CD8-positive, alpha-beta T cell (primary cell): ENCODE measurements at regions of chr6 and their contacts with region 1.

Region 1: DNA sequence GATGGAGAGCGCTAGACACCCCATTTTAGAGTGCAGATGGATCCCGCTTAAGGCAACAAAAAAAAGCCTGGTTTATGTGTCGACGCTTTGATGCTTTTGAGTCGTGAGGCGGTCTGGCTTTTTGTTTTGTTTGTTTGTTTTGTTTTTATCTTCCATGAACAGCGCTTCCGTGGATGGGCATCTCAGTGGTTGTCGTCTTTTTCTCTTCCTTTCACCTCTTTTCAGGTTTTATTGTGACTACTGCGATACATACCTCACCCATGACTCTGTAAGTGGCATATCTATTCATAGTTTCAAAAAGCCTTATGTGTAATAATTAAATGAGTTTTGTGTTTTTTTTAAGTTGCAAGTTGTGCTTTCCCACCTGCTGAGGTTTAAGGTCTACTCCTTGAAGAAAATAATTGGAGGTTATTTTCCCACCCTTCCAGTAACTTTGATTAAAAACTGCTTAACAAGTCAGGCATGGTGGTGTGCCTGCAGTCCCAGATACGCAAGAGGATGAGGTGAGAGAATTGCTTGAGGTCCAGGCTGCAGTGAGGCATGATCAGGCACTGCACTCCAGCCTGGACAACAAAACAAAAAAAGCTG is 476 bp downstream of the SNRPC start:
- DNase-seq: no peak
- ATAC-seq: no peak
- H3K4me3 ChIP-seq: peak overlapping the region; percentile 71 to 79
- H3K4me3 Mint-ChIP-seq: no peak overlapping the region
- H3K27ac ChIP-seq: peak overlapping the region; percentile 86 to 92
- H3K27ac Mint-ChIP-seq: no peak overlapping the region
- H3K4me1 ChIP-seq: peaks cover 18% of the 10 kb centered on the region
- H3K4me1 Mint-ChIP-seq: peaks cover 20% of the 10 kb centered on the region
- H3K27me3 ChIP-seq: no peaks in the 10 kb centered on the region
- H3K27me3 Mint-ChIP-seq: no peaks in the 10 kb centered on the region
- CTCF ChIP-seq: no peak

Region 2: GRCh38 chr6:34425498-34426410 is 332.0 kb before region 1 on chr6 and contains the start of gene RPS10:
- CTCF ChIA-PET with region 1: no interaction called
- POLR2A ChIA-PET with region 1: no interaction called
- intact Hi-C with region 1: loop called (anchors 1 to 2 kb)
- DNase-seq: peak; percentile 79 to 95 (median 89)
- ATAC-seq: peak; percentile 98
- H3K4me3 ChIP-seq: peak within 1 kb of the TSS; percentile 78 to 96
- H3K4me3 Mint-ChIP-seq: peak within 1 kb of the TSS; percentile 96
- H3K27ac ChIP-seq: peak within 1 kb of the TSS; percentile 90 to 95
- H3K27ac Mint-ChIP-seq: peak within 1 kb of the TSS; percentile 97
- H3K4me1 ChIP-seq: peaks cover 23% of the 10 kb centered on the region
- H3K4me1 Mint-ChIP-seq: peaks cover 36% of the 10 kb centered on the region
- H3K27me3 ChIP-seq: no peaks in the 10 kb centered on the region
- H3K27me3 Mint-ChIP-seq: no peaks in the 10 kb centered on the region
- CTCF ChIP-seq: no peak
- total RNA-seq, gene RPS10: 2,721 to 2,770 TPM

Region 3: DNA sequence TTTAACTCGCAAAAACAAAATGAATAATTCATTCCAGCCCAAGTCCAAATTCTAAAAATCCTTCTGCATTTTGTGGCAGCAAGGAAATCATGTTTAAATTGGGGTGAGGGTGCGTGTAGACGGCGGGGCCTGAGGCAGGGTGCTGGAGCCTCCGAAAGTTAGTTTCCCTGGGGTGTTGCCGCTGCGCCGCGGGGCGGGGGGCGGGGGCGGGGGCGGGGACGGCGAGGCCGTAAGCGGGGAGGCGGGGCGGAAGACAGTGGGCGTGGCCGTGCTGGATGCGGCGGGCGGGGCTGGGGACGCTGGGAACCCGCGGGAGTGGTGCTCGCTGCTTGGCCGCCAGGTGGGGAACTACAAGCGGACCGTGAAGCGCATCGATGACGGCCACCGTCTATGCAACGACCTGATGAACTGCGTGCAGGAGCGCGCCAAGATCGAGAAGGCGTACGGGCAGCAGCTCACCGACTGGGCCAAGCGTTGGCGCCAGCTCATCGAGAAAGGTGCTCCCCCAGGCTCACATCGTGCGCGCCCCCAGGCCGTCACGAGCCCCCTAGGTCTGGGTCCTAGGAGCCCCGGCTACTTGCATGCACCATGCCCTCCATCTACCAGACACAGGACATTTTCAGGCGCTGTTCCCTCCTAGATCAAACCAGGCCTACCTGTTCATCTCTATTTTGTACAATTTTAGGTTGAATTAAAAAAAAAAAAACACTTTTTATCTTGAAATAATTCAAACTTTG is 230.6 kb before region 1 on chr6:
- CTCF ChIA-PET with region 1: interaction called, 4 read pairs
- POLR2A ChIA-PET with region 1: interaction called, 3 read pairs
- intact Hi-C with region 1: loop called in 1 of 2 experiments (anchors 1 kb)
- DNase-seq: peak; percentile 91 to 99 (median 96)
- ATAC-seq: peak; percentile 98
- H3K4me3 ChIP-seq: peak overlapping the region; percentile 17 to 31
- H3K4me3 Mint-ChIP-seq: peak overlapping the region; percentile 58
- H3K27ac ChIP-seq: peak overlapping the region; percentile 31 to 58
- H3K27ac Mint-ChIP-seq: peak overlapping the region; percentile 80
- H3K4me1 ChIP-seq: peaks cover 7% of the 10 kb centered on the region
- H3K4me1 Mint-ChIP-seq: peaks cover 14% of the 10 kb centered on the region
- H3K27me3 ChIP-seq: no peaks in the 10 kb centered on the region
- H3K27me3 Mint-ChIP-seq: no peaks in the 10 kb centered on the region
- CTCF ChIP-seq: peak; percentile 51

Region 4: GRCh38 chr6:34671801-34672656 is 85.8 kb before region 1 on chr6:
- CTCF ChIA-PET with region 1: no interaction called
- POLR2A ChIA-PET with region 1: interaction called, 4 read pairs
- intact Hi-C with region 1: loop called in 1 of 2 experiments (anchors 1 kb)
- DNase-seq: peak; percentile 52 to 94 (median 75)
- ATAC-seq: peak; percentile 98
- H3K4me3 ChIP-seq: peak overlapping the region in 1 of 2 experiments; percentile 21
- H3K4me3 Mint-ChIP-seq: peak overlapping the region; percentile 72
- H3K27ac ChIP-seq: peak overlapping the region; percentile 25 to 82
- H3K27ac Mint-ChIP-seq: peak overlapping the region; percentile 95
- H3K4me1 ChIP-seq: peaks cover 50% of the 10 kb centered on the region
- H3K4me1 Mint-ChIP-seq: peaks cover 71% of the 10 kb centered on the region
- H3K27me3 ChIP-seq: no peaks in the 10 kb centered on the region
- H3K27me3 Mint-ChIP-seq: no peaks in the 10 kb centered on the region
- CTCF ChIP-seq: no peak

Region 5: DNA sequence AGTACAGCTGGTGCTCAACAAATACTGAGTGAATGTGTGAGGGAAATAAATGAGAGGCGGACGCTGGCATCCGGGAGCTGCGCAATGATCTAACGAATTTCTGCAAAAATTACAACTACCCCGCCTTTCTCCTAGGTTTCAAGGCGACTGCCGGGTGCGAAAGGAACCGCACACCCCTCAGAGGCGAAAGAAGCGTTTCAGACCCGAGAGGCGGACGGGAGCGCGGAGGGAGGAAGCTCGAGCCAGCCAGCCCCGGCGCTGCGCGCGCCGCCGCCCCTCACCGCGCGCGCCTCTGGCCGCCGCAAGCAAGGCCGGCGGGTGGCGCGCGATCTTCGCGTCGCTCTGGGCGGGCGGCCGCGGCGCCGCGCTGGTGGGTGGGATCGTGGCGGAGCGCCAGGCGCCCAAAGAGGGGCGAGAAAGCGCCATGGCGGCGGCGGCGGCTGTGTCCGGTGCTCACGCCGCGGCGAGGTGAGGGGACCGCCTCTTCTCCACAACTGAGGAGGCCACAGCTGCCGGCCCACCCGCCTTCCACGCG is 34.0 kb after region 1 on chr6 and contains the start of gene BLTP3A:
- CTCF ChIA-PET with region 1: interaction called, 6 read pairs
- POLR2A ChIA-PET with region 1: interaction called, 17 read pairs
- intact Hi-C with region 1: loop called (anchors 1 kb)
- DNase-seq: peak; percentile 48 to 91 (median 71)
- ATAC-seq: peak; percentile 90
- H3K4me3 ChIP-seq: peak within 1 kb of the TSS; percentile 75 to 95
- H3K4me3 Mint-ChIP-seq: peak within 1 kb of the TSS; percentile 99
- H3K27ac ChIP-seq: peak within 1 kb of the TSS; percentile 75 to 79
- H3K27ac Mint-ChIP-seq: peak within 1 kb of the TSS; percentile 94
- H3K4me1 ChIP-seq: peaks cover 12% of the 10 kb centered on the region
- H3K4me1 Mint-ChIP-seq: peaks cover 29% of the 10 kb centered on the region
- H3K27me3 ChIP-seq: no peaks in the 10 kb centered on the region
- H3K27me3 Mint-ChIP-seq: no peaks in the 10 kb centered on the region
- CTCF ChIP-seq: no peak
- total RNA-seq, gene BLTP3A: 8.8 to 9.3 TPM

Region 6: GRCh38 chr6:35601331-35602132 is 843.8 kb after region 1 on chr6:
- CTCF ChIA-PET with region 1: no interaction called
- POLR2A ChIA-PET with region 1: no interaction called
- intact Hi-C with region 1: loop called in 1 of 2 experiments (anchors 5 kb)
- DNase-seq: peak; percentile 36 to 94 (median 69)
- ATAC-seq: peak; percentile 78
- H3K4me3 ChIP-seq: peak overlapping the region; percentile 27 to 47
- H3K4me3 Mint-ChIP-seq: peak overlapping the region; percentile 76
- H3K27ac ChIP-seq: peak overlapping the region; percentile 50 to 63
- H3K27ac Mint-ChIP-seq: peak overlapping the region; percentile 93
- H3K4me1 ChIP-seq: peaks cover 89% of the 10 kb centered on the region
- H3K4me1 Mint-ChIP-seq: peaks cover 76% of the 10 kb centered on the region
- H3K27me3 ChIP-seq: no peaks in the 10 kb centered on the region
- H3K27me3 Mint-ChIP-seq: no peaks in the 10 kb centered on the region
- CTCF ChIP-seq: no peak